Panc1 (cell line): ENCODE measurements at regions of chr1 and their contacts with region 1.

Region 1: GRCh38 chr1:2174348-2175054 is 20.1 kb downstream of the FAAP20 start:
- DNase-seq: peak; percentile 25
- ATAC-seq: peak; percentile 90
- H3K4me3 ChIP-seq: no peak overlapping the region
- H3K27ac ChIP-seq: no peak overlapping the region
- H3K4me1 ChIP-seq: no peaks in the 10 kb centered on the region
- H3K27me3 ChIP-seq: no peaks in the 10 kb centered on the region
- CTCF ChIP-seq: peak; percentile 98

Region 2: DNA sequence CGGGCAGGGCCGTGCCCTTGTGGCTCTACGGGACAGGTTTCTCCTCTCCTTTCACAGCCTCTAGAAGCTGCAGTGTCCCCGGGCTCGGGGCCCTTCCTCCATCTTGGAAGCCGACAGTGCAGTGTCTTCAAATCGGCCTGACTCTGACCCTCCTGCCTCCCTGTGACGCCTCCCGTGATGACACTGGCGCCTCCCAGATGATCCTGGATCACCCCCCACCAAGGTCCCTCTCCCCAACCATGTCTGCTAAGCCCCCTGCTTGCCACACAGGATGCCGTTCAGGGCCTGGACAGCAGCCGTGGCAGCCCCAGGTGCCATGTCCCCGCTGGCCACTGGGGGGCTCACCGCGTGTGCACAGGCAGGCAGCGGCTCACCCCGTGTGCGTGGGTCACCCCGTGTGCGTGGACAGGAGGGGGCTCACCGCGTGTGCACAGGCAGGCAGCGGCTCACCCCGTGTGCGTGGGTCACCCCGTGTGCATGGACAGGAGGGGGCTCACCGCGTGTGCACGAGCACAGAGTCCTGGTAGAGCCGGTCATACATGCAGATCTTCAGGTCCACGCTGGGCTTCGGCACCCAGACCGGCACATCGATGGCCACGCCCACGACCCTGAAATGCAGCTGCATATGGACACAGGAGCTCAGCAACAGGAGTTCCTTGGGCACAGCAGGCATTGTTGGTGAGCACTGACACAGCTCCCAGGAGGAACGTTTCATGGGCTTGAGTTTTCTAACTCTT is 230.5 kb before region 1 on chr1:
- CTCF ChIA-PET with region 1: no interaction called
- POLR2A ChIA-PET with region 1: interaction called, 12 read pairs
- in situ Hi-C with region 1: no loop called
- intact Hi-C with region 1: no loop called
- DNase-seq: no peak
- ATAC-seq: peak; percentile 93
- H3K4me3 ChIP-seq: peak overlapping the region; percentile 25 to 51
- H3K27ac ChIP-seq: no peak overlapping the region
- H3K4me1 ChIP-seq: no peaks in the 10 kb centered on the region; the same call in 1 of the 2 replicates
- H3K27me3 ChIP-seq: no peaks in the 10 kb centered on the region
- CTCF ChIP-seq: peak; percentile 98

Region 3: GRCh38 chr1:2073382-2074230 is 100.9 kb before region 1 on chr1:
- CTCF ChIA-PET with region 1: interaction called, 16 read pairs
- POLR2A ChIA-PET with region 1: no interaction called
- in situ Hi-C with region 1: no loop called
- intact Hi-C with region 1: no loop called
- DNase-seq: no peak
- ATAC-seq: no peak
- H3K4me3 ChIP-seq: peak overlapping the region in 1 of 2 experiments; percentile 22; a peak in 1 of 4 replicates
- H3K27ac ChIP-seq: no peak overlapping the region
- H3K4me1 ChIP-seq: 0 out of 2 replicates have a peak, but pooled peaks cover 2% of the 10 kb centered on the region
- H3K27me3 ChIP-seq: no peaks in the 10 kb centered on the region
- CTCF ChIP-seq: no peak

Region 4: GRCh38 chr1:2443277-2444137 is 269.0 kb after region 1 on chr1:
- CTCF ChIA-PET with region 1: no interaction called
- POLR2A ChIA-PET with region 1: no interaction called
- in situ Hi-C with region 1: no loop called
- intact Hi-C with region 1: no loop called
- DNase-seq: no peak
- ATAC-seq: peak; percentile 17
- H3K4me3 ChIP-seq: peak overlapping the region; percentile 46 to 73
- H3K27ac ChIP-seq: peak overlapping the region; percentile 96
- H3K4me1 ChIP-seq: peaks cover 59% of the 10 kb centered on the region
- H3K27me3 ChIP-seq: no peaks in the 10 kb centered on the region
- CTCF ChIP-seq: peak; percentile 88; the same call in 1 of the 2 replicates